ENCODE measurements at regions of chr12 and their contacts with region 1.

Region 1: DNA sequence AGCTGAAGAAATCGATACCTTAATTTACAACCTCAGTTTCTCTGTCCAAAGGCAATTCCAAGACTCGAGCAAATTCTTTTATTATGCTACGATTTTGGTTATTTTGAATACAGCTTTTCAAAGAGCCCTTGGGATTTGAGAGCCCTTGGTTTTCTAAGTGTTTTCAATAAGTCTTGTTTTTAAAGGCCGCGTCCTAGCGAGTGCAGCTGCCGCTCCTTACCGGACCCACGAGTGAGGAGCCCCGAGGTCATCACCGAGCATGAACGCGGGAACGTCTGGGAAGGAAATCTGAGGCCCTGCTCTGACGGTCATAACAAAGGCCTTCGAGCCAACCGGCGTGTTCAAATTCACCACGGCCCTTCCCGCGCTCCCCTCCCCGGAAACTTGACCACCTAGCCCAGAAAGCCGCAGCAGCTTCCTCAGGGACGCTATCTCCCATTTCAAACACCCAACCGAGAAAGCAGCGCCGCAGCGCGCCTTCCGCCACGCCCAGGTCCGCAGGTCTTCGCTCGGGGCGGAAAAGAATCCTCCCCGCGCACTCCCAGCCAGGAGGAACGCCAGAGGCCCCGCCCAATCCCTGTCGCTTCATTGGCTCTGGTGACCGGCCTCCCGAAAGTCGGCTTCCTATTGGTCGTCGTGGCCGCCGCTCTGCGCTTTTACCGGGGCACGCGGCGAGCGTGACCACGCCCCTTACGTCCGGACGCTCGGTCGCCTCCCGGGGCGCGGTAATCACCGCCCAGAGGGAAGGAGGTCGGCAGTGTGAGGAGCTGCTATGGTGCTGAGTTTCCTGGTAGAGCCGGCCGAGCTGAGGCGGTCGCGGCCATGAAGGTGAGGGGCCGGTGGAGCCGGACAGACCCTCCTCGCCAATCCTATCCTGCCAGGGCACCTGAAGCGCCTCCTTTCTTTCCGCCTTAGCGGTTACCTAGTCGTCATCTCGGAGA is at the start of gene RNF34:
- DNase-seq: peak; percentile 97 to 98 (median 97)
- H3K4me3 ChIP-seq: peak within 1 kb of the TSS; percentile 96
- H3K4me3 Mint-ChIP-seq: peak within 1 kb of the TSS; percentile 90 to 100 (median 93)
- H3K27ac ChIP-seq: peak within 1 kb of the TSS; percentile 97
- H3K27ac Mint-ChIP-seq: peak within 1 kb of the TSS; percentile 80 to 99 (median 96)
- H3K4me1 ChIP-seq: peaks cover 28% of the 10 kb centered on the region
- H3K4me1 Mint-ChIP-seq: peaks cover 37 to 53% (median 46%) of the 10 kb centered on the region in 3 donors
- H3K27me3 ChIP-seq: no peaks in the 10 kb centered on the region
- H3K27me3 Mint-ChIP-seq: no peaks in the 10 kb centered on the region
- total RNA-seq, gene RNF34: 85.5 to 90.8 TPM

Region 2: GRCh38 chr12:121334513-121335343 is 64.9 kb before region 1 on chr12:
- CTCF ChIA-PET with region 1: interaction called, 15 read pairs
- POLR2A ChIA-PET with region 1: no interaction called
- DNase-seq: peak in 2 of 5 donors; percentile 44 to 46
- H3K4me3 ChIP-seq: no peak overlapping the region
- H3K4me3 Mint-ChIP-seq: no peak overlapping the region
- H3K27ac ChIP-seq: no peak overlapping the region
- H3K27ac Mint-ChIP-seq: peak overlapping the region in 6 of 8 donors; percentile 4 to 75 (median 58)
- H3K4me1 ChIP-seq: peaks cover 4% of the 10 kb centered on the region
- H3K4me1 Mint-ChIP-seq: peaks cover 4 to 5% (median 5%) of the 10 kb centered on the region in 3 donors
- H3K27me3 ChIP-seq: no peaks in the 10 kb centered on the region
- H3K27me3 Mint-ChIP-seq: peaks cover 0 to 2% of the 10 kb centered on the region in 2 donors

Region 3: GRCh38 chr12:121351820-121352681 is 47.6 kb before region 1 on chr12 and contains the start of gene ANAPC5:
- CTCF ChIA-PET with region 1: interaction called, 5 read pairs
- POLR2A ChIA-PET with region 1: interaction called, 24 read pairs
- DNase-seq: peak; percentile 80 to 92 (median 90)
- H3K4me3 ChIP-seq: peak within 1 kb of the TSS; percentile 86
- H3K4me3 Mint-ChIP-seq: peak within 1 kb of the TSS; percentile 86 to 97 (median 94)
- H3K27ac ChIP-seq: peak within 1 kb of the TSS; percentile 86
- H3K27ac Mint-ChIP-seq: peak within 1 kb of the TSS; percentile 76 to 98 (median 96)
- H3K4me1 ChIP-seq: peaks cover 25% of the 10 kb centered on the region
- H3K4me1 Mint-ChIP-seq: peaks cover 31 to 54% (median 44%) of the 10 kb centered on the region in 3 donors
- H3K27me3 ChIP-seq: no peaks in the 10 kb centered on the region
- H3K27me3 Mint-ChIP-seq: peaks cover 0 to 8% of the 10 kb centered on the region in 2 donors
- total RNA-seq, gene ANAPC5: 133 TPM

Measured in CD8-positive, alpha-beta memory T cell (primary cell).